ENCODE measurements at regions of chr2 and their contacts with region 1.

Region 1: GRCh38 chr2:219530048-219530963 is 13.3 kb downstream of the CHPF start:
- DNase-seq: peak; percentile 77
- ATAC-seq: peak; percentile 89
- H3K4me3 ChIP-seq: no peak overlapping the region
- H3K27ac ChIP-seq: no peak overlapping the region
- H3K4me1 ChIP-seq: peaks cover 11% of the 10 kb centered on the region
- H3K27me3 ChIP-seq: peaks cover 28 to 92% of the 10 kb centered on the region in 2 experiments; a peak in 4 of 5 replicates
- CTCF ChIP-seq: peak; percentile 99
- EP300 ChIP-seq: no peak
- POLR2A ChIP-seq: no peak
- RAD21 ChIP-seq: peak; percentile 100

Region 2: GRCh38 chr2:219402665-219403515 is 127.4 kb before region 1 on chr2:
- CTCF ChIA-PET with region 1: interaction called, 19 read pairs
- POLR2A ChIA-PET with region 1: interaction called, 3 read pairs
- in situ Hi-C with region 1: loop called (anchors 5 kb)
- intact Hi-C with region 1: loop called (anchors 1 kb)
- DNase-seq: peak; percentile 67
- ATAC-seq: peak; percentile 78
- H3K4me3 ChIP-seq: no peak overlapping the region
- H3K27ac ChIP-seq: no peak overlapping the region
- H3K4me1 ChIP-seq: peaks cover 42% of the 10 kb centered on the region
- H3K27me3 ChIP-seq: peaks cover 2 to 31% of the 10 kb centered on the region in 2 experiments; a peak in 4 of 5 replicates
- CTCF ChIP-seq: peak; percentile 88
- EP300 ChIP-seq: no peak
- POLR2A ChIP-seq: no peak
- RAD21 ChIP-seq: peak; percentile 70

Region 3: GRCh38 chr2:219459460-219460311 is 70.6 kb before region 1 on chr2:
- CTCF ChIA-PET with region 1: interaction called, 27 read pairs
- POLR2A ChIA-PET with region 1: no interaction called
- in situ Hi-C with region 1: no loop called
- intact Hi-C with region 1: loop called (anchors 1 kb)
- DNase-seq: peak; percentile 58
- ATAC-seq: peak; percentile 85
- H3K4me3 ChIP-seq: no peak overlapping the region
- H3K27ac ChIP-seq: no peak overlapping the region
- H3K4me1 ChIP-seq: peaks cover 10% of the 10 kb centered on the region; the same call in 1 of the 2 replicates
- H3K27me3 ChIP-seq: peaks cover 4 to 74% of the 10 kb centered on the region in 2 experiments; a peak in 4 of 5 replicates
- CTCF ChIP-seq: peak; percentile 91
- EP300 ChIP-seq: no peak
- POLR2A ChIP-seq: no peak
- RAD21 ChIP-seq: peak; percentile 51; the same call in 1 of the 2 replicates

Region 4: DNA sequence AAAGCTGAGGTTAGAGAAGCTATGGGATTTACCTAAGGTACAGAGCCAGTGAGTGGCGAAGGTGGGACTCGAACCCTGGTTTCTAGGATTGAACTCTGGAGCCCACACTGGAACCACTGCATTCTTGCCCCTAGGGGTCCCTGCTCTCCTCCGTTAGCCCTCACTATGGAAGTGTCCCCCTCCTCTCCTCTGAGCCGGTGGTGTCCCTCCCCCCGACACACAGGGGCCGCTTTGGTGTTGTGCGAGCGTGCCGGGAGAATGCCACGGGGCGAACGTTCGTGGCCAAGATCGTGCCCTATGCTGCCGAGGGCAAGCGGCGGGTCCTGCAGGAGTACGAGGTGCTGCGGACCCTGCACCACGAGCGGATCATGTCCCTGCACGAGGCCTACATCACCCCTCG is 40.1 kb before region 1 on chr2:
- CTCF ChIA-PET with region 1: interaction called, 53 read pairs
- POLR2A ChIA-PET with region 1: interaction called, 14 read pairs
- in situ Hi-C with region 1: loop called (anchors 5 kb)
- intact Hi-C with region 1: loop called (anchors 1 kb)
- DNase-seq: no peak
- ATAC-seq: no peak
- H3K4me3 ChIP-seq: no peak overlapping the region
- H3K27ac ChIP-seq: no peak overlapping the region
- H3K4me1 ChIP-seq: peaks cover 1% of the 10 kb centered on the region; the same call in 1 of the 2 replicates
- H3K27me3 ChIP-seq: peaks cover 41 to 99% of the 10 kb centered on the region in 2 experiments; a peak in 4 of 5 replicates
- CTCF ChIP-seq: peak; percentile 50
- EP300 ChIP-seq: no peak
- POLR2A ChIP-seq: no peak
- RAD21 ChIP-seq: no peak